Cardiac septum (tissue), 1 donor: ENCODE measurements at regions of chr3 and their contacts with region 1.

Region 1: DNA sequence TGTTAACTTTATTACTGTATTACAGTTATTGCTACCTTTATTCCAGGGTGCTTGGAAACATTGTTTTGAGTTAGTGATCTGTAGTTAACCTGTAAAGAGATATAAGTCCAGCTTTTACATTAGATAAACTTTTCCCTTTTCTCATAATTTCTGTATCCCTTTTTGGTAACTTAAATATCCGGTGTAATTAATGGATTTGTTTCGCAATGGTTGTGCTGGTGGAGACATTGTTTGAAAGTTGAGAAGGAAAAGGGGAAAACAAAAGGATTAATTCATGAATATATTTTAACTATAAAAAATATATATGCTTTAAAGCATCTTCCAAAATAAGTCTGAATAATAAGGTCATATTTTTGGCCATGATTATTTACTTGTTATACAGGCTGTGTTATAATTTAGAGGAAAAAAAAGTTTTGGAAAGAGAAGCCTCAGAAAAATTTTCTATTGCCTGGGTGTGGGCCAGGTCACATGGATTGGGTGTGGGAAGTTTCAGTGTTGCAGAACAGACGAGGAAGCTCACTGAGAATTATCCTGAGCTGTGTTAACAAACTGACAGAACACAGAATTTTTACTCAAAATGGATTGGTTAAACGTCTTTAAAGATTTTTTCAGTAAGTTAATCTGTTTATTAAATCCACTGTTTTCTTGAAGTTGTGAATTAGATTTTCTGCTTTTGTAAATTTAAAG is 27.7 kb upstream of the IL20RB start:
- DNase-seq: peak; percentile 81

Region 2: DNA sequence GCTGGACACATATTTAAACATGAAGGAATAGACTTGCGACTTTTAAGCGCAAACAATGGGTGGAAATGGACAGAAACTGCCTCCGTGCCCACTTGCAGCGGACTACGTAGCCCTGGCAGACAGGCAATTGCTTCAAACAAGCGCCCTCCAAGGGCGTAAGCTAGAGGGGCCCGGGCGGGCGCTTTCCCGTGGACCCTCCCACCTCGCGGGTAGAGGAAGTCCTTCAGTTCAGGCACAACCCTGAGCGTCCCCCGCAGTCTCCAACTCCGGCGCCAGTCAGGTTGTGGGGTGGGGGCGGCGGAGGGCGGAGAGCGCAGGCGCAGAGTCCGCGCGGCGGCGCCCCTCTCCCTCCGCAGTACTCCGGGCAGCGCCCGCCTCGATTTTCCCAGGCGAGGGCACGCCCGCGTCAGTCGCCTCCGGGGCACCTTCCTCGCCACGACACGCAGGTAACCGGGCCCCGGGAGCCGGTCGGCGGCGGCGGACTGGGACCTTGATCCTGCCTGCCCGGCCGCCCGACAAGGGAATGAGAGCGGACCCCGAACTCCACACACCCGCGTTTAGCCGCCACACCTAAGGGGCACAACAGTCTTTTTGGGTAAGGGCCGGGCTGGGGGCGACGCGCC is 111.2 kb before region 1 on chr3 and contains the start of gene SLC35G2:
- intact Hi-C with region 1: loop called (anchors 1 kb)
- DNase-seq: peak; percentile 82
- total RNA-seq, gene SLC35G2: 4.7 TPM

Region 3: DNA sequence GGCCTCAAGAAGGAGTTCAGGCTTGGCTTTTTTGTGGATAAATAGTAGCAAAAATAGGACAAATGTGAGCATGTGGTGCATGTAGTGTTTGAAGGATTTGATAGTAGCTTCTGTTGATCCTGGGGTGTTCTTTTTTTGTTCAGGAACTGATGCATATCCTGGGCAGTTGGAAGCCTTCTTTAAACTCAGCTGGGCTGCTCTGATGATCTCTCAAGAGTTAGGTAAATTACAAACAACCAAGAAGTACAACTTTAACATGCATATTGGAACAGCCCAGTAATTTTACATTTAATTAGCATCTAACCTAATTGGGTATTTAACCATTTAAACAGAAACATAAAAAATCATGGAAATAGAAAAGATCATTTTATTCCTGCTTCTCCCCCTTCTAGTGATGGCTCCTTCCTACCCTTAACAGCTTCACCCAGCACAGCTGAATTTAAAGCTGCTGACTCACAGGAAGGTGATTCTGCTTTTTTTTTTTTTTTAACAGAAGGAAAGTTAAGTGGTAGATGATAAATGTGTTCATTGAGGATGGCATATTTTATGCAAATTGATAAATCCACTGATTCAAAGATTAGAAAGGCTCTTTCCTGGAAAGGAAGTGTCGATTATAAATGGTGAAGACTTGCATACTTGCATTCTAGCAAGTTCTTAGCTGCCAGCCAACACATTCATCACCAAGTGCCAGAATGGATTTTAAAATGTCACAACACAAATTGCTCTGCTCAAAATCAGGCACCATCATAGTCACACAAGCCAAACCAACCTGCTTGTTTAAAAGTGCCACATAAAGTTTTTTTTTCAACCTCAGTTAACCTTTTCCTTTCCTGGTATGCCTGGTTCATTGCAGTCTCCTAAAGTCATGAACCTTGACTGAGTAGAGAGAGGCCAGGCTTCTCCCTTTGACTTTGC is 91.2 kb before region 1 on chr3:
- intact Hi-C with region 1: no loop called
- DNase-seq: no peak

Region 4: DNA sequence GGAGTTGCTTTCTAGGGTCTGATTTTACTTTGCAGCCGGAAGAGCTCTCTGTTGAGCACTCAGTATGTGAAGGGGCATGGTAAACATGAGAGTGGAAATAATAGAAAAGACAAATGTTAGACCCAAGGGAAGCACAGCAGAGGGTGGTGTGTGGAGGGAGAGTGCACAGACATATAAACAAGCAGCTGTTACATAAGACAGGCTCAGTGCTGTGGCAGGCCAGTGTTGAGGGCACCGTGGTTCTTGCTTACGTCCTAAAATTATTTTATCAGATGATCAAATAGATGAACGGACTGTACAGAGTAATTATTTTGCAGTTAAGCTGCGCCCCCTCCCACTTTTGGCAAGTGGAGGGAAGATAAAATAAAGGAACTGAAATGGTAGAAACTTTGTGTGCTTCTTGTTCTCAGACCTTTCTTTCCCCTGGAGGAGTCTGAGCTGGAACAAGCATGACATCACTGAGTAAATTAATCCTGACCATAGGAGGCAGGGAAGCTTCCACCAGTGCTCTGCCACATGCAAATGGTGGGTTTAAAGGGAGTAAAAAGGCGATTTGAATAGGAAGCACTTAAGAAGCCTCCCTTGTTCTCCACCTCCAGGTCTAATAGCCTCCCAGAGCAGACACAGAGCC is 233.2 kb after region 1 on chr3:
- intact Hi-C with region 1: no loop called
- DNase-seq: no peak